Activated naive CD4-positive, alpha-beta T cell treated with anti-CD3 and anti-CD28 coated beads for 36 hours (primary cell): ENCODE measurements at regions of chr20 and their contacts with region 1.

Region 1: DNA sequence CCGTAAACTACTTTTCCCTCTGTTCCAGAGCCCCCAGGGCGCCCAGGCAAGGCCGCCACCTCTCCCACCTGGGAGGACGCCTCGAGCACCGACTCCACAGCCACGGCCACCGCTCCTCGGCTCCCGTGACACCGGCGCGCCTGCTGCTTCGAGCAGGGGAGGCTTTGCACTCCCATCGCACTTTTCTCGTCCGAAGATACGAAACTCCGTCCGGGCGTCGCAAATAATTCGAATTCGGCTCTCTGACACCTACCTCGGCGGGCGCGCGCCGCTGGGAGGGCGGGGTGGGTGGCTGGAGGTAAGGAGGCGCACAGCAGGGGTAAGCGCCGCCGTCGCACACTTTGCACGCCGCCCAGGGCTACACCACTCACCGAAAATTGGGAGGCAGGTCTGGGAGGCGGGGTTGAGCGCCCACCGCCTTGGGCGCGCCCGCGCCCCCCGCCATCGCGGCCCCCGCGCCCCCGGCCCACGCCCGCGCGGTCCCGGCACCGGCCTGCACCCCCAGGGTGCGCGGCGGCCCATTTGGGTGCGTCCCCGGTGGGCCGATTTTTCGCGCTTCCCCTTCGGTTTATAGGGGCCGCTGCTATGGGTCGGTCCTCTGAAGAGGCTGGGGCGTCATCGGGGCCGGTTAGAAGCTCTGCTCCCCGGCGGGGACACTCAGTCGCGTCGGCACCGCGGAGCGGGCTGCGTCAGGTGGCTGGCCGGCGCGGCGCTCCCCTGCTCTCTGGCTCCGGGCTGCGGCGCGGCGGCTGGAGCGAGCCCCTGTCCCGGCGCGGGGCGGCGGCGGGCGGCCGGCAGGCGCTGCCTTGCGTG is 36.2 kb downstream of the GNAS start:
- DNase-seq: peak; percentile 89
- H3K4me3 Mint-ChIP-seq: peak overlapping the region; percentile 84
- H3K27ac Mint-ChIP-seq: no peak overlapping the region
- H3K4me1 Mint-ChIP-seq: peaks cover 27% of the 10 kb centered on the region
- H3K27me3 Mint-ChIP-seq: no peaks in the 10 kb centered on the region

Region 2: GRCh38 chr20:58388882-58389323 is 499.8 kb before region 1 on chr20 and contains the start of gene VAPB:
- CTCF ChIA-PET with region 1: no interaction called
- intact Hi-C with region 1: loop called (anchors 5 kb)
- DNase-seq: peak; percentile 96
- H3K4me3 Mint-ChIP-seq: peak within 1 kb of the TSS; percentile 96
- H3K27ac Mint-ChIP-seq: peak within 1 kb of the TSS; percentile 90
- H3K4me1 Mint-ChIP-seq: peaks cover 42% of the 10 kb centered on the region
- H3K27me3 Mint-ChIP-seq: no peaks in the 10 kb centered on the region
- total RNA-seq, gene VAPB: 26.8 to 27.9 TPM

Region 3: GRCh38 chr20:58907399-58908137 is 18.8 kb after region 1 on chr20:
- CTCF ChIA-PET with region 1: interaction called, 3 read pairs
- intact Hi-C with region 1: loop called (anchors 1 kb)
- DNase-seq: peak; percentile 65
- H3K4me3 Mint-ChIP-seq: peak overlapping the region; percentile 66
- H3K27ac Mint-ChIP-seq: peak overlapping the region; percentile 88
- H3K4me1 Mint-ChIP-seq: peaks cover 45% of the 10 kb centered on the region
- H3K27me3 Mint-ChIP-seq: no peaks in the 10 kb centered on the region

Region 4: DNA sequence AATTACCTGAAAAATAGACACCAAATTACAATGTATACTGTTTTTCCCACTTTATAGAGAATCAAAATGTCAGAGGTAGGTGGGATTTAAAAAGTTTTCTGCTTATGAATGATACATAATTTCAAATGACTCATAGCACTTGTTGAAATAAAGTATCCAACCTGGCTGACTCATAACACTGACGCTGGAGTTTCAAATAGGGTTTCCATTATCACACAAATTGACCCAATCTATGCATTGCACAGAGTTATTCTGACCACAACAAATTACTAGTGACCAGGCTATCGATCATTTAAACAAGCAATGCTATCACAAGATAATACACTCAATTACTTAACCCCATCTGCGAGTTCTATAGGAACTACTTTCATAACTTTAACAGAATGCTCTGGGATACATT is 185.7 kb after region 1 on chr20:
- CTCF ChIA-PET with region 1: no interaction called
- intact Hi-C with region 1: loop called (anchors 2 kb)
- DNase-seq: peak; percentile 17
- H3K4me3 Mint-ChIP-seq: no peak overlapping the region
- H3K27ac Mint-ChIP-seq: no peak overlapping the region
- H3K4me1 Mint-ChIP-seq: peaks cover 49% of the 10 kb centered on the region
- H3K27me3 Mint-ChIP-seq: peaks cover 9% of the 10 kb centered on the region